ENCODE measurements at regions of chr4 and their contacts with region 1.

Region 1: DNA sequence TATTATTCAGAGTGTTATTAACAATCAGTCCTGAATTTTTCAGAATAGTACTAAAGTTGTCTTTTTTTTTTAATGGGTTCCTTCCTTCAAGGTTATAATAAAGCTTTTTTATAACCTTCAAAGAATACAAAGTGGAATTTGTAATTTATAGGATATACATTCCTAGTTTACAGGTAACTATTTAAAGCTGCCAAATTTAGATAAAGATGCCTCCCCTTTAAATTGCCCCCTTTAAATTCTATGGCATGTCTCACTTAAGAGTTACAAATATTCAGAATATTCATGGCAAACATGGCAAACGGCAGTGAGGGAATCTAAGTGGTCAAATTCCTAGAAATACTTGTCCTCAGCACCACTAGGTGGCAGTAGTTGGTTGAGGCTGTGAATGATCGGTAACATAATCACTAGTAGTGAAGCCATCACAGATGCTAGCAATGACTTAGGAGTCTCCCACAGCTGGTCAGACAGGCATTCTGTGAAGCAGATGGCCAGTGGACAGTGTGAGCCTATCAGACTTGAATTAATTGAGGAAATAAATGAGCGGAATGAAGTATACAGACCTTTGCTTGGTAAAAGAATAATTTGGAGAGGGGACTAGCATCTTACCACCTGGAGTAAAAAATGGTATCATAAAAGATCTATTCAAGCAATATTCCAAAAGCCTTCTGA is 86.4 kb downstream of the CBR4 start:
- DNase-seq: no peak
- H3K4me3 ChIP-seq: no peak overlapping the region
- H3K27ac ChIP-seq: peak overlapping the region; percentile 34 to 50 (median 46)
- H3K4me1 ChIP-seq: peaks cover 0 to 30% (median 26%) of the 10 kb centered on the region in 4 donors
- H3K27me3 ChIP-seq: no peaks in the 10 kb centered on the region
- CTCF ChIP-seq: peak; percentile 64 to 74 (median 67)
- EP300 ChIP-seq: no peak
- POLR2A ChIP-seq: no peak

Region 2: GRCh38 chr4:168514249-168514852 is 409.3 kb before region 1 on chr4:
- intact Hi-C with region 1: loop called (anchors 10 kb)
- DNase-seq: no peak
- H3K4me3 ChIP-seq: no peak overlapping the region
- H3K27ac ChIP-seq: no peak overlapping the region
- H3K4me1 ChIP-seq: no peaks in the 10 kb centered on the region
- H3K27me3 ChIP-seq: no peaks in the 10 kb centered on the region
- CTCF ChIP-seq: peak in 1 of 4 experiments; percentile 47
- EP300 ChIP-seq: no peak
- POLR2A ChIP-seq: no peak

Region 3: DNA sequence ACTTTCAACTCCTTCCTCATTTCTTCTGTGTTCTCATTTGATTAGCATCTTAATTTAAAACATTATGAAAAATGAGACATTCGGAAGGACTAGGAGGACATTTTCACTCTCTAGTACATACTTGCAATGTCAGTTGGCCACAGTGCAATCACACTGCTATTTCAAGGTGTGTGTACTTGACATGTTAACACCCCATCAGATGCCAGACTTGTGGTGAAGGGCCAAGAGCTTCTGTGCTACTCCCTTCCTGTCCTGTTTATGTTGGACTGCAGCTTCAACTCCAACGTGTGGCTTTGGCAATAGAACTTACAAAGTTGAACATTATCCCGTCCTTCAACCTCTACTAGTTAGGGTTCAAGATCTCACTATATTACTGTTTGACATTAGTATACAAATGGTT is 205.8 kb before region 1 on chr4:
- intact Hi-C with region 1: no loop called
- DNase-seq: no peak
- H3K4me3 ChIP-seq: no peak overlapping the region
- H3K27ac ChIP-seq: peak overlapping the region; percentile 74 to 91 (median 86)
- H3K4me1 ChIP-seq: peaks cover 0 to 48% (median 43%) of the 10 kb centered on the region in 4 donors
- H3K27me3 ChIP-seq: no peaks in the 10 kb centered on the region
- CTCF ChIP-seq: no peak
- EP300 ChIP-seq: no peak
- POLR2A ChIP-seq: no peak

Region 4: GRCh38 chr4:169010125-169011023 is 86.7 kb after region 1 on chr4 and contains the start of gene CBR4:
- intact Hi-C with region 1: loop called (anchors 10 kb)
- DNase-seq: peak; percentile 99
- H3K4me3 ChIP-seq: peak within 1 kb of the TSS; percentile 64 to 72 (median 69)
- H3K27ac ChIP-seq: peak within 1 kb of the TSS; percentile 92 to 96 (median 93)
- H3K4me1 ChIP-seq: peaks cover 0 to 31% (median 18%) of the 10 kb centered on the region in 4 donors
- H3K27me3 ChIP-seq: no peaks in the 10 kb centered on the region
- CTCF ChIP-seq: peak; percentile 8 to 52 (median 17)
- EP300 ChIP-seq: peak in 1 of 4 donors; percentile 22
- POLR2A ChIP-seq: peak; percentile 78 to 81
- total RNA-seq, gene CBR4: 13.4 to 23.9 (median 20.6) TPM

Region 5: DNA sequence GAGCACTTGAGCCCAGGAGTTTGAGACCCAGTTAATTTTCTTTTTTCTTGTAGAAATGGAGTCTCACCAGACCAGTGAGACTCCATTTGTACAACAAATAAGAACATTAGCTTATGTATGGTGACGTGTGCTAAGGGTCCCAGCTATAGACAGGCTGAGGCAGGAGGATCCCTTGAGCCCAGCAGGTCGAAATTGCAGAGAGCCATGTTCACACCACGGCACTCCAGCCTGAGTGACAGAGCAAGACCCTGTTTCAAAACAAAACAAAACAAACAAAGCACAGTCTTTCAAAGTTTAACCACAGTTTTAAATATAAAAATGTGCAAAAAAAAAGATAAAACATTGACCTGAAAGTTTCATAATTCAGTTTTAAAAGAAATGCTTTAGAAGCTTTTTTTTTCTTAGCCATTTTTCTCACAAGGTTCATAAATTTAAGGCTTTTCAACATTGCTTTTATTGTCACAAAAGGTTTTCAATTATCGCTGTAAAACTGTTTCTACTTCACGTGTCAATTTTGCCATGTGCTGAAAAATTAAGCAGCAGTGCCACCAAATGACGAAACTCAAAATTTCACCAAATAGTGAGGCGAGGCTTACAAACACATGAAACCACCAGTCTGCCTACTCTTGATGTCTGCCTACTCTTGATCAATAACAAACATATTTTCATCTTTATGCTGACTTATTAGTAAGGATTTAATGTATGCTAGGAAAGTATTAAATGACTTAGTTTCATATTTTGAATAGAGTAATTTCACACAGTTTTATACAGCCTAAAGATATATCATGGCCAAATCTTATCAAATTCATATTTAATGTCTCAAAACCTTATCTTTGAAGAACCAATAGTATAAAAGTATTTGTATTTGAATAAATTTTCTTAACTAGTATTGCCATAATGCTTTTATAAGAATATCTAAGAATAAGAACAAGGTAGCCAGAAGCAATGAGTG is 562.4 kb after region 1 on chr4:
- intact Hi-C with region 1: loop called (anchors 5 kb)
- DNase-seq: no peak
- H3K4me3 ChIP-seq: no peak overlapping the region
- H3K27ac ChIP-seq: no peak overlapping the region
- H3K4me1 ChIP-seq: no peaks in the 10 kb centered on the region
- H3K27me3 ChIP-seq: no peaks in the 10 kb centered on the region
- CTCF ChIP-seq: peak in 3 of 4 experiments; percentile 5 to 42 (median 19)
- EP300 ChIP-seq: no peak
- POLR2A ChIP-seq: no peak